Activated B cell treated with CpG ODN at 0.5 μM for 24 hours (primary cell): ENCODE measurements at regions of chr10 and their contacts with region 1.

Region 1: DNA sequence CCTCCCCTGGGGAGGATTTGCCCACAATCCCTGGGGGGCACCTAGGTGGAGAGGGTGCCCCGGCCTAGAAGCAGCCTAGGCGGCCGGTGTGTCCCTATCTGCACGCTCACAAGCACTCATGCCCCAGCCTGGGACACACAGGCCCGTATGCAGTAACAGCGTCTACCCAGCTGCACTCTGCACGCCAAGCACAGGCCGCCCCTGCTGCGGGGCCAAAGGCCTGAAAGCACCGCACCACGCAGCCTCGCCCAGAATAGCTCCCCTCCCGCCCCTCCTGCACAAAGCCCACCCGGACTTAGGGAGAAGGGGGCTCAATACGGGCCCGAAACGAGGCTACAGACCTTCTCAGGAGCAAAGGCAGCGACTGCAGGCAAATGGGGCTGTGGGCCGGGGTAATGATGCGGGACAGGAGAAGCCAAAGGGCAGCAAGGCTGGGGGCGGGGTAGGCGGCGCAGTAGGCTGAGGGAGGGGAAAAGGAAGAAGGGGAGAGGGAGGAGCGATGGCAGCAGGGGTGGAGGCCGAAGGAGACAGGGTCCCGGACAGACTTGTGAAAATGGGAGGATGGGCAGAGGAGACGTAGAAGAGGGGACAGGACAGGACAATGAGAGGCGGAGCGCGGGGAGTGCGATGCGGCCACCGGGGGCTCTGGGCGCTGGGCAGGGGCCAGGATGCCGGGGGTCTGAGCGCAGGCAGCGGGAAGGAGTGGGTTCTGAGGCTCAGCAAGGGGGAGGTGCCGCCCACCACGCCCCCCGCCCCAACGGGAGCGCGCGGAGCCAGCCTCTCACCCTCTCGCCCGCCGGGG is 544 bp downstream of the GPRIN2 start:
- DNase-seq: no peak
- ATAC-seq: no peak
- H3K4me3 Mint-ChIP-seq: peak overlapping the region; percentile 30
- H3K27ac Mint-ChIP-seq: no peak overlapping the region
- H3K4me1 Mint-ChIP-seq: peaks cover 13% of the 10 kb centered on the region
- H3K27me3 Mint-ChIP-seq: peaks cover 7% of the 10 kb centered on the region
- CTCF ChIP-seq: no peak

Region 2: DNA sequence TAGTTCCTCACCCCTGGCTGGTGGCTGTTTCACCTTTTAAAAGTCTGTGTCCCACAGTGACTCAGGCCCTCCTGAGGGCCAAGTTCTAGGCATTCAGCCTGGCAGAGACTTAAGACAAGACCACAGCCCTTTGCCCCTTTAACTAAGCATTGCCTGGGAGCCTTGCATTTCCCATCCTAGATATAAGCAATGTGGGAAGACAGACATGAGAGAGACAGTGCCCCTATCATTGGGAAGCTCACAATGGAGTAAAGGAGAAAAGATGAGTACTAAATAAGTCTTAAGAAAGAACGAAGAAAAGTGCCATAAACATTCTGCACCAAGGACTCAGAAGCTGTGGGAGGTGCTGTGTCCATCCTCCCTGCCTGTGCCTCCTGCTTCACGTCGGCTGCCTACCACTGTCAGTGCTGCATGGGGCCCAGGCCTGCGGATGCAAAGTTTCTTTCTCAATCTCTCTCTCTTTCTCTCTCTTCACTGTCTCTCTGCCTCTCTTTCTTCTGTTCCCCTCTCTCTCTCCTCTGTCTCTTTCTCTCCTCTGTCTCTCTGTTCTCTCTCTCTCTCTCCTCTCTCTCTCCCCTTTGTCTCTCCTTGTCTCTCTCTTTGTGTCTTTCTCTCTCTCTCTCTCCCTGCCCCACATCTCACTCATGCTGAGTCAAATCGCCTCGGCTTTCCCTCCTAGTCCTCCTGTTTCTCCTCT is 20.9 kb before region 1 on chr10:
- CTCF ChIA-PET with region 1: no interaction called
- POLR2A ChIA-PET with region 1: no interaction called
- intact Hi-C with region 1: loop called (anchors 2 kb)
- DNase-seq: no peak
- ATAC-seq: no peak
- H3K4me3 Mint-ChIP-seq: no peak overlapping the region
- H3K27ac Mint-ChIP-seq: no peak overlapping the region
- H3K4me1 Mint-ChIP-seq: no peaks in the 10 kb centered on the region
- H3K27me3 Mint-ChIP-seq: peaks cover 22% of the 10 kb centered on the region
- CTCF ChIP-seq: no peak